GM10248 (cell line): ENCODE measurements at regions of chr12 and their contacts with region 1.

Region 1: GRCh38 chr12:48957141-48958048 is at the start of gene ARF3:
- DNase-seq: peak; percentile 97
- CTCF ChIP-seq: no peak

Region 2: DNA sequence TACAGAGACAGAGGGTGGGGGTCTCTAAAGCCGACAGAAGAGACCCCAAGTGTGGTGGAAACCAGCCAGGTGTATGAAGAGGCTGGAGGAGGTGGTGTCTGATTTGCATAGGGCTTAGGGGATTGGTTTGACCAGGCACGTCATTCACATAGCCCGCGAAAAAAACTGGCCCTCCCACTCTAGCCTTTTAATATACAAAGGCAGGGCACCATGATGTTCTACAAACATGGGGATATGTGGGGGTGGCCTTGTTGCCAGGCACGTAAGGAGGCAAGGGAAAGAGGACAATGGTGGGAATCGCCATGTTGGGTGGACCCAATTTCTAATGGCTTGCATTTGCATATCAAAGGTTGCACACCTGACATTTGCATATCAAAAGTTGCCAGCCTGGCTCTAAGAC is 400.8 kb before region 1 on chr12:
- CTCF ChIA-PET with region 1: no interaction called
- POLR2A ChIA-PET with region 1: no interaction called
- DNase-seq: no peak
- CTCF ChIP-seq: no peak

Region 3: DNA sequence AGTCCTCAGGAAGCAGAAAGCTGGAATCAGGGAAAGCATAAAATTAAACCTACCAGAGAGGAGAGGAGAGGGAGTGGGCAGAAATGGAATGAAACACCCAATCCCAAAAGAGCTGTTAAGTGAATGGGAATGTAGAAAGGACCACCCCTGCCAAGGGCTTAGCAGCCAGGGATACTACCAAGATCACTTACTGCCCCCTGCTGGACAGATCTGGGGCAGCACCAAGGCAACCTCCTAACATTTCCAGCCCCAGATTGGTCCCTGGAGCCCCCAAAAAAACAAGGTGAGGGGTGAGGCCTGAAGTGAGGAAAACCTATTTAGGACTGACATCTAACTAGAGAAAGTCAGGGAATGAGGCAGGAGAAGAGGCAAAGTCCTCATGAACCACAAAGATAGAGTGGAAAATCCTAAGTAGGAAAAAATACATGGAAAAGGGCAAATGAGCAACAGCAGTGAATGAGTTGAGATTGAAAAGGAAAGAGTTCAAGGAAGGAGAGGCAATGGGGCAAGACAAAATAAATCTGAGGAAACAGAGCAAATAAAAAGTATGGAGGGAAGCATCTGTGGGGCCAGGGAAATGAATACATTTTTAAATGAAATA is 20.9 kb before region 1 on chr12:
- CTCF ChIA-PET with region 1: interaction called, 59 read pairs
- POLR2A ChIA-PET with region 1: no interaction called
- DNase-seq: peak; percentile 85
- CTCF ChIP-seq: peak; percentile 92

Region 4: DNA sequence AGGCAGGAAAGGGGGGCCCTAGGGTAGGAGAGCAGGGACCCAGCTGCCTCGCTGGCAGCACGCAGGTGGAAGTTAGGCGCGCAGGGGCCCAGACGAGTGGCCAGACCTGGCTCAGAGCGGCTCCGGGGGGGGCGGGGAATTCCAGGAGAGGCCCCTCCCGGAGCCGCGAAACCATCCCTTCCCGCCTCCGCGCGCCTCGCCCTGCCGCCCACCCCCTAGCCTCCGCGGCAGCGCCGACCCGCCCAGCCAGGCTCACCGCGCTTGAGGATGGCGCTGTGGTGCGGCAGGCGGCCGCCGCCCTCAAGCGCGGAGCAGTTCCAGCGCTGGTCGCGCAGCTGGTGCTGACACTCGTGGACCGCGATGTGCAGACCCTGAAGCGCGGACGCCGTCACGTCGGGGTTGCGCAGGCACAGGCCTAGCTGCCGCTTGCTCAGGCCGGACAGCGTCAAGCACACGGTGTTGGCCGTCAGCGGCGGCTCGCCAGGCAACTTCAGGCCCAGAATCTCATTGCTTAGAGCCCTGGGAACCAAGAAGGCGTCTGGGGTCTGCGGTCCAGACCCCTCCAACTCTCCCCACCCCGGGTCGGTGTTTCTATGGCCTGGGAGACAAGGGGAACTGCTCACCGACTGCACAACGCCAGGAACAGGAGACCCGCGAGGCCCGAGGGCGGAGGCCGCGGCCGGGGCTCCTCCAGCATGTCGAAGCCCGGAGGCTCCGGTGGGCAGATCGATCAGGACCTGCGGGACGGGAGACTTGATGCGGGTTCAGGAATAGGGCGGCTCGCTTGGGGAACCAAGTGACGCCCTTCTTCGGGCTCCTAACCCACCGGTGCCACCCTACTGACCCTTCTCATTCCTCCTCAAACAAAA is 12.7 kb after region 1 on chr12:
- CTCF ChIA-PET with region 1: interaction called, 33 read pairs
- POLR2A ChIA-PET with region 1: interaction called, 4 read pairs
- DNase-seq: peak; percentile 66
- CTCF ChIP-seq: peak; percentile 29

Region 5: GRCh38 chr12:48977315-48978281 is 20.2 kb after region 1 on chr12:
- CTCF ChIA-PET with region 1: interaction called, 264 read pairs
- POLR2A ChIA-PET with region 1: no interaction called
- DNase-seq: peak; percentile 87
- CTCF ChIP-seq: peak; percentile 72

Region 6: GRCh38 chr12:49049566-49050413 is 92.4 kb after region 1 on chr12:
- CTCF ChIA-PET with region 1: no interaction called
- POLR2A ChIA-PET with region 1: no interaction called
- DNase-seq: no peak
- CTCF ChIP-seq: no peak